HepG2 (cell line): ENCODE measurements at regions of chr18 and their contacts with region 1.

Region 1: GRCh38 chr18:62714671-62715435 is 488 bp upstream of the PHLPP1 start:
- DNase-seq: peak; percentile 98
- ATAC-seq: peak; percentile 94
- H3K4me3 ChIP-seq: peak overlapping the region; percentile 64 to 78 (median 72)
- H3K27ac ChIP-seq: peak overlapping the region; percentile 88
- H3K4me1 ChIP-seq: peaks cover 4% of the 10 kb centered on the region; the same call in 1 of the 2 replicates
- H3K27me3 ChIP-seq: no peaks in the 10 kb centered on the region; a peak in 1 of 5 replicates
- CTCF ChIP-seq: peak; percentile 96
- EP300 ChIP-seq: no peak
- POLR2A ChIP-seq: peak; percentile 21 to 37; a peak in 1 of 4 replicates
- RAD21 ChIP-seq: peak; percentile 92

Region 2: DNA sequence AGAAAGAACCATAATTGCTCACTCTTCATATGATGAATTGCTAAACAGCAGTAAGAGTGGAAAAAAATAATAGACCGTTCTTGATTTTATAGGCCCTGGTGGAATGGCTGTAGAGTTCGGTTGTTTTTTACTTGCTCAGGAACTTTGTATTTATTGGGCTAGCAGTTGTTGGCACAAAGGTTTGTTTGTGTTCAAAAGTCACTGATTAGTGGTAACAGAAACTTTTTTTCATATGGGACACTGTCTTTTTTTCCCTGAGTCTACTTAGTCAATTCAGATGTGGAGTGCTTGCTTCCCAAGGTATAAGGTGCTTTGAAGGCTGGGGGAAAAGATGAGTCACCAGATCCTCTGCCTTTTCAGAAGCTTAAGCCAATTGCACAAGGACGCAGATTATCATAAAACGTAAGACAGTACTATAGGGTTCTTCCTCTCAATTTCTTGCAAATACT is 26.3 kb after region 1 on chr18:
- CTCF ChIA-PET with region 1: no interaction called
- POLR2A ChIA-PET with region 1: interaction called, 34 read pairs
- in situ Hi-C with region 1: no loop called
- intact Hi-C with region 1: loop called (anchors 2 kb)
- DNase-seq: peak; percentile 93
- ATAC-seq: peak; percentile 84
- H3K4me3 ChIP-seq: peak overlapping the region; percentile 56 to 66 (median 59)
- H3K27ac ChIP-seq: peak overlapping the region; percentile 92
- H3K4me1 ChIP-seq: peaks cover 80% of the 10 kb centered on the region
- H3K27me3 ChIP-seq: no peaks in the 10 kb centered on the region
- CTCF ChIP-seq: no peak
- EP300 ChIP-seq: peak in 1 of 2 experiments; percentile 88; a peak in 2 of 4 replicates
- POLR2A ChIP-seq: no peak
- RAD21 ChIP-seq: no peak

Region 3: GRCh38 chr18:62814132-62814759 is 99.4 kb after region 1 on chr18:
- CTCF ChIA-PET with region 1: no interaction called
- POLR2A ChIA-PET with region 1: no interaction called
- in situ Hi-C with region 1: no loop called
- intact Hi-C with region 1: no loop called
- DNase-seq: no peak
- ATAC-seq: no peak
- H3K4me3 ChIP-seq: no peak overlapping the region
- H3K27ac ChIP-seq: no peak overlapping the region
- H3K4me1 ChIP-seq: peaks cover 64% of the 10 kb centered on the region
- H3K27me3 ChIP-seq: no peaks in the 10 kb centered on the region
- CTCF ChIP-seq: no peak
- EP300 ChIP-seq: no peak
- POLR2A ChIP-seq: no peak
- RAD21 ChIP-seq: no peak

Region 4: GRCh38 chr18:62898359-62898758 is 183.5 kb after region 1 on chr18:
- CTCF ChIA-PET with region 1: no interaction called
- POLR2A ChIA-PET with region 1: interaction called, 3 read pairs
- in situ Hi-C with region 1: no loop called
- intact Hi-C with region 1: loop called (anchors 5 kb)
- DNase-seq: peak; percentile 35
- ATAC-seq: peak; percentile 64
- H3K4me3 ChIP-seq: no peak overlapping the region
- H3K27ac ChIP-seq: no peak overlapping the region
- H3K4me1 ChIP-seq: peaks cover 27% of the 10 kb centered on the region
- H3K27me3 ChIP-seq: no peaks in the 10 kb centered on the region
- CTCF ChIP-seq: no peak
- EP300 ChIP-seq: no peak
- POLR2A ChIP-seq: no peak
- RAD21 ChIP-seq: no peak

Region 5: DNA sequence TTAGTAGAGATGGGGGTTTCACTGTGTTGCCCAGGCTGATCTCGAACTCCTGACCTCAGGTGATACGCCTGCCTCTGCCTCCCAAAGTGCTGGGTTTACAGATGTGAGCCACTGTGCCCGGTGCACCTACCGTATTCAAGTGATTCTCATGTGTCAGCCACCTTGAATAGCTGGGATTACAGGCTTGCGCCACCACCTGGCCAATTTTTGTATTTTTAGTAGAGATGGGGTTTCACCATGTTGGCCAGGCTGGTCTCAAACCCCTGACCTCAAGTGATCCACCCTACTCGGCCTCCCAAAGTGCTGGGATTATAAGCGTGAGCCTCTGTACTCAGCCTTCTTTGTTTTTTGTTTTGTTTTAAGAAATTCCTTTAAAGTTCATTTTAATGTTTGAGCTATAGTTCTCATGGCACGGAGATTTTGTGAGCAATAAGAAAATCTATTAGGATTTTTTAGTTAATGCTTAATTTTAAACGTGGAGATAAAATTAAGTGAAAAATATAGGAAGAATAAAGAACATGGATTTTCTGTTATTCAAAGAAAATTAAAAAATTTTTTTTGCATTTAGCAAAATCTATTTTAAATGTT is 243.1 kb after region 1 on chr18:
- CTCF ChIA-PET with region 1: interaction called, 9 read pairs
- POLR2A ChIA-PET with region 1: no interaction called
- in situ Hi-C with region 1: loop called (anchors 10 kb)
- intact Hi-C with region 1: loop called (anchors 1 kb)
- DNase-seq: peak; percentile 46
- ATAC-seq: peak; percentile 93
- H3K4me3 ChIP-seq: no peak overlapping the region
- H3K27ac ChIP-seq: no peak overlapping the region
- H3K4me1 ChIP-seq: 0 out of 2 replicates have a peak, but pooled peaks cover 1% of the 10 kb centered on the region
- H3K27me3 ChIP-seq: no peaks in the 10 kb centered on the region
- CTCF ChIP-seq: peak; percentile 77
- EP300 ChIP-seq: no peak
- POLR2A ChIP-seq: no peak
- RAD21 ChIP-seq: 0 out of 2 replicates have a peak, but pooled peaks have one; percentile 26

Region 6: DNA sequence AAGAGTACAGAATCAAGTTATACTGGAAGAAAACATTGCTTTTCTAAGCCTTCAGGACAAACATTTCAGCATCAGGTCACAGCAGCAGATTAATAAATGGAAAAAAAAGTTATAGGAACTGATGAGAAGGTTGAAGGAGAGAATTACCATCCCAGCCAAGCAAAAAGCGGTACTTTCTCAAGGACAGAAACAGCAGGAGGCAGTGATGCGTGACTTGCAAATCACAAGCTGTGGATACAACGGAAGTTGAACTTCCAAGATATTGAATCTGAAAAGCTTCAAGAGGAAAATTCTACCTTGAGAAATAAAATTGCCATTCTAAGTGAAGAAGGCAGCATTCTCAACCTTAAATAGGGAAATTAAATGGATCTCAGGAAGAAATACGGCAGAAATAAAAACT is 808.8 kb after region 1 on chr18:
- CTCF ChIA-PET with region 1: no interaction called
- POLR2A ChIA-PET with region 1: no interaction called
- in situ Hi-C with region 1: no loop called
- intact Hi-C with region 1: no loop called
- DNase-seq: no peak
- ATAC-seq: no peak
- H3K4me3 ChIP-seq: no peak overlapping the region
- H3K27ac ChIP-seq: no peak overlapping the region
- H3K4me1 ChIP-seq: no peaks in the 10 kb centered on the region
- H3K27me3 ChIP-seq: no peaks in the 10 kb centered on the region
- CTCF ChIP-seq: no peak
- EP300 ChIP-seq: no peak
- POLR2A ChIP-seq: no peak
- RAD21 ChIP-seq: no peak